ENCODE measurements at regions of chr1 and their contacts with region 1.

Region 1: GRCh38 chr1:151510957-151511635 is at the start of gene CGN:
- DNase-seq: peak; percentile 79
- H3K4me3 ChIP-seq: peak within 1 kb of the TSS; percentile 56 to 62 (median 62)
- H3K27ac ChIP-seq: no peak within 1 kb of the TSS
- H3K4me1 ChIP-seq: peaks cover 36% of the 10 kb centered on the region
- H3K27me3 ChIP-seq: no peaks in the 10 kb centered on the region
- CTCF ChIP-seq: no peak
- total RNA-seq, gene CGN: 2.0 to 3.7 TPM

Region 2: GRCh38 chr1:151156515-151156819 is 354.6 kb before region 1 on chr1 and contains the start of gene TNFAIP8L2:
- CTCF ChIA-PET with region 1: no interaction called
- dilution Hi-C with region 1: no loop called
- in situ Hi-C with region 1: no loop called
- intact Hi-C with region 1: no loop called
- DNase-seq: no peak
- H3K4me3 ChIP-seq: no peak within 1 kb of the TSS
- H3K27ac ChIP-seq: no peak within 1 kb of the TSS
- H3K4me1 ChIP-seq: peaks cover 3% of the 10 kb centered on the region
- H3K27me3 ChIP-seq: no peaks in the 10 kb centered on the region
- CTCF ChIP-seq: no peak
- total RNA-seq, gene TNFAIP8L2: not detected

Region 3: GRCh38 chr1:151534665-151535278 is 23.7 kb after region 1 on chr1:
- CTCF ChIA-PET with region 1: no interaction called
- dilution Hi-C with region 1: no loop called
- in situ Hi-C with region 1: no loop called
- intact Hi-C with region 1: loop called (anchors 1 kb)
- DNase-seq: peak; percentile 57
- H3K4me3 ChIP-seq: no peak overlapping the region
- H3K27ac ChIP-seq: no peak overlapping the region
- H3K4me1 ChIP-seq: peaks cover 16% of the 10 kb centered on the region
- H3K27me3 ChIP-seq: no peaks in the 10 kb centered on the region
- CTCF ChIP-seq: peak; percentile 95 to 98

Region 4: GRCh38 chr1:151547119-151547899 is 36.2 kb after region 1 on chr1:
- CTCF ChIA-PET with region 1: no interaction called
- dilution Hi-C with region 1: no loop called
- in situ Hi-C with region 1: no loop called
- intact Hi-C with region 1: loop called (anchors 1 kb)
- DNase-seq: peak; percentile 93
- H3K4me3 ChIP-seq: peak overlapping the region in 1 of 3 experiments; percentile 0
- H3K27ac ChIP-seq: peak overlapping the region; percentile 64
- H3K4me1 ChIP-seq: peaks cover 41% of the 10 kb centered on the region
- H3K27me3 ChIP-seq: no peaks in the 10 kb centered on the region
- CTCF ChIP-seq: no peak

Region 5: DNA sequence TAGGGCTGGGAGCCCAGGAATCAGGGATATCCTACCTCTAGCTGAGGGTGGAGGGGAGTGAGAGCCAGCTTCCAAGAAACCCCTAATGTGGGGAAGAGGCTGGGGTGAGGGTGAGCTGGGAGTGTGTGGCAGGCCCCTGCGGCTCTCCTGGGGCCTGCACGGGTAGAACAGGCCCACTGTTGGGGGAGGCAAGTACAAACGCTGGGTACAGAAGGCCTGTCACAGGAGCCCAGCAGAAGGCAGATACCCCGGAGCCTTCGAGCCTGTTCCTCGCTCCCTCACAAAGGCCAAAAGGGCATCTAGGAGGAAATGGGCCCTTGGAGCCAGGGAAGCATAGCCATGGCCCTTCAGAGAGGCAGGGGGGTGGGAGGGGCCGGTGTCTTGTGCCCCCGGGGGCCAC is 191.8 kb after region 1 on chr1:
- CTCF ChIA-PET with region 1: no interaction called
- dilution Hi-C with region 1: no loop called
- in situ Hi-C with region 1: no loop called
- intact Hi-C with region 1: no loop called
- DNase-seq: no peak
- H3K4me3 ChIP-seq: no peak overlapping the region
- H3K27ac ChIP-seq: no peak overlapping the region
- H3K4me1 ChIP-seq: no peaks in the 10 kb centered on the region
- H3K27me3 ChIP-seq: no peaks in the 10 kb centered on the region
- CTCF ChIP-seq: no peak

Measured in mammary epithelial cell (primary cell).